Activated T-helper 2 cell treated with anti-CD3 and anti-CD28 coated beads, Interferon-gamma antibody, Interleukin-2, Interleukin-4, amounts not matched to agents 10 μg/mL and 5 μg/mL and 100 μg/mL, durations not matched to agents 14 hours and 24 hours and 36 hours (primary cell): ENCODE measurements at regions of chr2 and their contacts with region 1.

Region 1: DNA sequence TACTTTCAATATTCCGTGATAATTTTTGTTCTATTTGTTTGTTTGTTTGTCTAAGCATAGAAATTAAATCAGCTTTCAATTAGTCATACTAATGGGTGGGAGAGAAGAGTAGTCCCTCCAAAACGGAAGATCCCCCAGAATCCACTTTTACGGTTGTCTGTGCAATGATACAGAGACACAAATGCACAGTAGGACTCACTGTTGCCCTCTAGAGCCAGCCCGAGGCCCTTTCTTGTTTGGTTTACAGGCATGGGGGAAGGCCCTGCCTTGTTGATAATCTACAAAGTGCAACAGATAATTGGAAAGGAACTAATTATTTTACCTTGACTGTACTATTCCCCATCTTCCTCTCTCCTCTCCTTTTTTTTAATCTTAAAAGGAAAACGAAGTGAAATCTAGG is 121.1 kb downstream of the ACOXL start:
- DNase-seq: peak; percentile 43
- H3K4me3 Mint-ChIP-seq: no peak overlapping the region
- H3K27ac Mint-ChIP-seq: peak overlapping the region; percentile 81
- H3K4me1 Mint-ChIP-seq: peaks cover 86% of the 10 kb centered on the region
- H3K27me3 Mint-ChIP-seq: peaks cover 2% of the 10 kb centered on the region

Region 2: GRCh38 chr2:110143982-110144381 is 709.5 kb before region 1 on chr2:
- intact Hi-C with region 1: loop called (anchors 5 kb)
- DNase-seq: no peak
- H3K4me3 Mint-ChIP-seq: no peak overlapping the region
- H3K27ac Mint-ChIP-seq: no peak overlapping the region
- H3K4me1 Mint-ChIP-seq: peaks cover 29% of the 10 kb centered on the region
- H3K27me3 Mint-ChIP-seq: peaks cover 4% of the 10 kb centered on the region

Region 3: DNA sequence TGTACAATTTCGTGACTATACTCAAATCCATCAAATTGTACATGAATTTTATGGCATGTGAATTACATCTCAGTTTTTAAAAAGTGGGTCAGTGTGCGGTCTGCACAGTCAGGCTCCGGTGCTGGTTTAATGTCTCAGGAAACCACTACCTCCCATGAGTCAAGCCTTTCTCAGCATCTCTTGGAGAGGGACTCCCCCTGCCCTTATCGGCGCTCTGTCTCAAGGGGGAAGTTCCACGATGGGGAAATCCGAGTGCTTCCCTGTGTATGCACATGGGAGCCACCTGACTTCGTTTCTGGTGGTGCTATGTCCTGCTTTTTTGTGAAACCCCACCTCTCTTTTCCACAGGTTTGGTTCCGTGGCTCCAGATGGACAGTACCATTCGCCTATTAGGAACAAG is 48.6 kb before region 1 on chr2:
- intact Hi-C with region 1: loop called (anchors 2 kb)
- DNase-seq: no peak
- H3K4me3 Mint-ChIP-seq: no peak overlapping the region
- H3K27ac Mint-ChIP-seq: peak overlapping the region; percentile 22
- H3K4me1 Mint-ChIP-seq: peaks cover 16% of the 10 kb centered on the region
- H3K27me3 Mint-ChIP-seq: peaks cover 41% of the 10 kb centered on the region

Region 4: DNA sequence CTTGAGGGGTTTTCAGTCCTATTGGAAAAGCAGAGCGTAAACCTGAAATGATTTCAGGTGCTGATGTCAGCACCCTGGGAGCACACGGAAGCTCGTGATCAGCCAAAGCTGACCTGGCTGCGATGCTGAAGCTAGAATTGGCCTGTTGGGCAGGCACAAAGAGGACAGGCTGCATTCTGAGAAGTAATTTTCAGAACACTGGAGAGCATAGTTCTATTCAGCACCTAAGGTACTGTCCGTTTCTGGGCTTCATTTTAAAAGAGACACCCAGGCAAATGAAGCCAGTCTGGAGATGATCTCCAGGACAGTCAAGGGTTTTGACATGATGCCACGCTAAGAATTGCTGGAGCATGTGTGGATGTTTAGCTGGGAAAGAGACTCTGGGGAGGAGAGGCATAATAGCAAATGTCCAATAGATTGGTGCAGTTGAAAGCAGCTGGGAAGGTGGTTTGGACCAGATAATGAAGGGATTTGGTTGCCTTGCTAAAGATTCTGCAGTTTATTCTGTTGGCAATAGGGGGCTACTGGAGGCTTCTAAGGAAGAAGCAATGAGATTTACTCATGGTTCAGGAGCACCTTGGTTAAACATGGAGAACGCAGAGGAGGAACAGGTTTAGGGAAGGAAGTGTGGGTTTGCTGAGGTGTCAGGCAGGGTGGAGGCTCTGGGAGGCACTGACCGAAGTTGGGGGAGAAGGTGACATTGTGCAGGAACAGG is 34.6 kb before region 1 on chr2:
- intact Hi-C with region 1: no loop called
- DNase-seq: no peak
- H3K4me3 Mint-ChIP-seq: no peak overlapping the region
- H3K27ac Mint-ChIP-seq: no peak overlapping the region
- H3K4me1 Mint-ChIP-seq: peaks cover 8% of the 10 kb centered on the region
- H3K27me3 Mint-ChIP-seq: peaks cover 33% of the 10 kb centered on the region

Region 5: DNA sequence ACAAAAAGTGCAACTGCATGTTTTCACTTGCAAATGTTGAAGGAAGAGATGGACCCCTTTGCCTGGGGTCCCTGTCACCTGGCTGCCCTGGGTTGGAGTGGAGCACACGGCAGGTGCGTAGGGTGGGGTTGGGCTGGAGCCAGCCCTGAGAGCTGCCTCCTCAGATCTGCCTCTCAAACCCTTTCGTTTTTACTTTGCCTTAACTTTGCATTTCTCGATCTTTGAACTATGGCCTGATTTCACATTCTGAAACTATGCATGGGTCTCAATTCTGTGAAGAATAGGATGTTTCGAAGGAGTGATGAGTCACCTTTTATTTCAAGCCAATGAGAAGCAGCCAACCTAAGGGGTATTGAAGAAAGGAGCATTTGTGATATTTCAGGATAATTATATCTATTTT is 11.7 kb after region 1 on chr2:
- intact Hi-C with region 1: loop called (anchors 1 kb)
- DNase-seq: peak; percentile 22
- H3K4me3 Mint-ChIP-seq: peak overlapping the region; percentile 3
- H3K27ac Mint-ChIP-seq: peak overlapping the region; percentile 10
- H3K4me1 Mint-ChIP-seq: peaks cover 74% of the 10 kb centered on the region
- H3K27me3 Mint-ChIP-seq: peaks cover 18% of the 10 kb centered on the region

Region 6: GRCh38 chr2:110940376-110940910 is 86.9 kb after region 1 on chr2:
- intact Hi-C with region 1: no loop called
- DNase-seq: no peak
- H3K4me3 Mint-ChIP-seq: no peak overlapping the region
- H3K27ac Mint-ChIP-seq: no peak overlapping the region
- H3K4me1 Mint-ChIP-seq: no peaks in the 10 kb centered on the region
- H3K27me3 Mint-ChIP-seq: peaks cover 11% of the 10 kb centered on the region

Region 7: GRCh38 chr2:111116843-111117597 is 263.5 kb after region 1 on chr2:
- intact Hi-C with region 1: loop called (anchors 2 kb)
- DNase-seq: peak; percentile 55
- H3K4me3 Mint-ChIP-seq: peak overlapping the region; percentile 87
- H3K27ac Mint-ChIP-seq: peak overlapping the region; percentile 91
- H3K4me1 Mint-ChIP-seq: peaks cover 35% of the 10 kb centered on the region
- H3K27me3 Mint-ChIP-seq: peaks cover 35% of the 10 kb centered on the region